ENCODE measurements at regions of chr3 and their contacts with region 1.

Region 1: GRCh38 chr3:18988614-18989229 is 159.6 kb upstream of the KCNH8 start:
- DNase-seq: no peak
- ATAC-seq: peak; percentile 47; the same call in 1 of the 3 replicates
- H3K4me3 ChIP-seq: no peak overlapping the region
- H3K27ac ChIP-seq: no peak overlapping the region
- H3K4me1 ChIP-seq: no peaks in the 10 kb centered on the region
- H3K27me3 ChIP-seq: no peaks in the 10 kb centered on the region
- CTCF ChIP-seq: peak; percentile 12 to 41 (median 30); a peak in 5 of 6 replicates
- EP300 ChIP-seq: no peak
- POLR2A ChIP-seq: no peak
- RAD21 ChIP-seq: peak; percentile 63

Region 2: GRCh38 chr3:18623220-18623619 is 365.5 kb before region 1 on chr3:
- CTCF ChIA-PET with region 1: no interaction called
- POLR2A ChIA-PET with region 1: no interaction called
- RAD21 ChIA-PET with region 1: no interaction called
- SMC1A ChIA-PET with region 1: no interaction called
- in situ Hi-C with region 1: no loop called
- intact Hi-C with region 1: no loop called
- DNase-seq: no peak
- ATAC-seq: no peak
- H3K4me3 ChIP-seq: no peak overlapping the region
- H3K27ac ChIP-seq: no peak overlapping the region
- H3K4me1 ChIP-seq: no peaks in the 10 kb centered on the region
- H3K27me3 ChIP-seq: no peaks in the 10 kb centered on the region
- CTCF ChIP-seq: no peak
- EP300 ChIP-seq: no peak
- POLR2A ChIP-seq: no peak
- RAD21 ChIP-seq: no peak

Region 3: DNA sequence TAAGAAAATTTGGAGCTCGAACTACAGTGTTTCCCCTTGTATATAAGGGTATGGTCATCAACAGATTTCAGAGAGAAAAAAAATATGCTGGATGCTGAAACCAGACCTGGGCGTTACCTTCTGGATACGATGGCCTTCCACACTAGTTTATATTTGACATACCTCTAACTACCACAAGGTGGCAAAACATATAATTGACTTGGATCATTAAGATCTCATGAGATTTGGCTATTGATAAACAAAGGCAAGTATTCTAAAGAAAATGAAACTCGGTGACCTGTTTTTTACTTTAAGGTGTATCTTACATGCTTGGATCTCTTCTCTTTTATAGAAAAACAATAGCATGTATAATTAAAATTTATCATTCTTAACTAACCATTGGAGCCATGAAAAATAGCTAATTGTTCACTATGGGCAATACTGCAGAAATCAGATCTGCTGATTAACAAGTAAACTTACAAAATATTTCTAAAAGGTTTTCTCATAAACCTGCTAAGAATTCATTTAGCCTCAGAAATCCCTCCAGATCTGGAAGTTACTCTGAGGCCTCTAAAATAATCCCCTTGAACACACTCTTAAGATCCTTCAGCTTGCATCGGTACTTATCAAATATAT is 141.0 kb before region 1 on chr3:
- CTCF ChIA-PET with region 1: interaction called, 30 read pairs
- POLR2A ChIA-PET with region 1: no interaction called
- RAD21 ChIA-PET with region 1: interaction called, 9 read pairs
- SMC1A ChIA-PET with region 1: interaction called, 10 read pairs
- in situ Hi-C with region 1: no loop called
- intact Hi-C with region 1: loop called (anchors 1 kb)
- DNase-seq: no peak
- ATAC-seq: peak; percentile 79
- H3K4me3 ChIP-seq: no peak overlapping the region
- H3K27ac ChIP-seq: no peak overlapping the region
- H3K4me1 ChIP-seq: no peaks in the 10 kb centered on the region
- H3K27me3 ChIP-seq: no peaks in the 10 kb centered on the region
- CTCF ChIP-seq: peak; percentile 39 to 42 (median 42); a peak in 4 of 6 replicates
- EP300 ChIP-seq: no peak
- POLR2A ChIP-seq: no peak
- RAD21 ChIP-seq: peak; percentile 35; the same call in 1 of the 2 replicates

Measured in GM12878 (cell line).